Sigmoid colon (tissue), 7 donors: ENCODE measurements at regions of chr15 and their contacts with region 1.

Region 1: DNA sequence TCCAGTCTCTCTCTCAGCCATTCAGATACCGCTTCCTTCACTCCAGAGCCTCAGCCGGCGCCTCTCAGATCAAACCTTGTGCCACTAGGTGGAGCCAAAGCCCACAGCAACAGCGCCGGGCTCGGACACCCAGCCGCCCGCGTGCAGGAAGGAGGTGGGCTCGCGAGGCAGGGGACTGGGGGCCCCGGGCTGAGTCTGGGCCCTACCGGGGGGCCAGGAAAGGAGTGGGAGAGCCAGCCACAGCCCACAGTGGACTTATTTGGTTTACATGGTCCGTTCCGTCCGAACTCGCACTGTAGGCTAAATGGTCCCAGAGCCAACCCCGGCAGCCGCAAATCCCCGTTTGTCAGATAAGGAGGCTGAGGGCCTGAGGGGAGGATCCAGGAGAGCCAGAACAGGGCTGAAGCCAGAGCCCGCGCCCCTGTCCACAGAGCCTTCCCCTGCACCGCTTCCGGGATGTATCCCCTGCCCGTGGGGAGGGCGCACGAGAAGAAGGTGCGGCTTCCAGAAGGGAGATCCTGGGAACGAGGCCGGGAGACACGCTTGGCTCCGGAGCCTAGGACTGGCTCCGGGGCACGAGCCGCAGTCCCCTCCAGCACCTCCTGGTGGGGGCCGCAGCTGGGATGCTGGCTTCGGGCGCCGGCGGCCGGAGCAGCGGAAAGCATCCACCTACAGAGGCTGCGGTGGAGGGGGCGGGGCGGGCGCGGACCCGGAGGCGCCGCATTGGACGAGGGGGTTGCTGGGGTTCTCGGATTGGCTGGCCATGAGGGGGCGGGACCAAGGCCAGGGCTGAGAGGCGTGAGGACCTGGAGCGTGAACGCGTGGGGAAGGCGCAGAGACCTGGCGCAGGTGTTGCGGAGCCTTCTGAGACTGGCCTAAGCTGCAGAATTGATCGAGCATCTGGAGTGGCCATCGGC is 6.5 kb upstream of the CYP11A1 start:
- DNase-seq: peak; percentile 95
- H3K4me3 ChIP-seq: peak overlapping the region; percentile 40 to 67 (median 54)
- H3K27ac ChIP-seq: peak overlapping the region in 1 of 4 donors; percentile 61
- H3K4me1 ChIP-seq: peaks cover 0 to 19% (median 12%) of the 10 kb centered on the region in 4 donors
- H3K27me3 ChIP-seq: no peaks in the 10 kb centered on the region
- CTCF ChIP-seq: peak; percentile 59 to 88 (median 72)
- EP300 ChIP-seq: no peak
- POLR2A ChIP-seq: no peak

Region 2: DNA sequence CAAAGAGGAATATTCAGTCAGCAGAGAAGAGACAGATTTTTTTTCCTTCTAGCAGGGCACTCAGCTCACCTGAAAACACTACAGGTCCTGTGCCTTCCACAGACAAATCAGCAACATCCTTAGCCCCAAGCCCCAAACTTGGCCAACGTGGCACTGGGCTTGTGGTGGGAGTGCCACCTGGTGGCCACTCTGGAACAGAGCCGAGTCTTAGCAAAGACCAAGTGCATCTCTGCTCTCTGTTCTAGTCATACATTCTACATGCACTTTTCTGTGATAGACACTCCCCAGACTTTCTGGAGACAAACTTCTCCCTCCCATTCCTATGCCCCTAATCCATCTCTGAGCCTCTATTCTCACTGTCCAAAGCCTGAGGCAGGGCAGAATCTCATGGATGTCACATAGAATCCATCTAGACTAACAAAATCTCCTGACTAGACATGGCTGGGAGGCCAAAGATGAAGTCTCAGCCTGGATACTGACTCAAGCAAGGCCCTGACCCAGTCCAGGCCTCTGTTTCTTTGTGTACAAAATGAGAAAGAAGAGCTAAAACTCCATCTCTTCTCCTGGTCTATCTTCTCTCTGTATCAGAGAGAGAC is 64.8 kb after region 1 on chr15:
- intact Hi-C with region 1: loop called (anchors 1 kb)
- DNase-seq: peak; percentile 78
- H3K4me3 ChIP-seq: no peak overlapping the region
- H3K27ac ChIP-seq: no peak overlapping the region
- H3K4me1 ChIP-seq: peaks cover 0 to 9% (median 6%) of the 10 kb centered on the region in 4 donors
- H3K27me3 ChIP-seq: peaks cover 0 to 3% (median 0%) of the 10 kb centered on the region in 3 donors
- CTCF ChIP-seq: peak; percentile 49 to 87 (median 65)
- EP300 ChIP-seq: no peak
- POLR2A ChIP-seq: no peak

Region 3: GRCh38 chr15:74489518-74490338 is 115.7 kb after region 1 on chr15:
- intact Hi-C with region 1: loop called (anchors 5 kb)
- DNase-seq: no peak
- H3K4me3 ChIP-seq: no peak overlapping the region
- H3K27ac ChIP-seq: no peak overlapping the region
- H3K4me1 ChIP-seq: no peaks in the 10 kb centered on the region
- H3K27me3 ChIP-seq: no peaks in the 10 kb centered on the region
- CTCF ChIP-seq: peak in 2 of 4 experiments; percentile 14 to 62
- EP300 ChIP-seq: no peak
- POLR2A ChIP-seq: no peak

Region 4: DNA sequence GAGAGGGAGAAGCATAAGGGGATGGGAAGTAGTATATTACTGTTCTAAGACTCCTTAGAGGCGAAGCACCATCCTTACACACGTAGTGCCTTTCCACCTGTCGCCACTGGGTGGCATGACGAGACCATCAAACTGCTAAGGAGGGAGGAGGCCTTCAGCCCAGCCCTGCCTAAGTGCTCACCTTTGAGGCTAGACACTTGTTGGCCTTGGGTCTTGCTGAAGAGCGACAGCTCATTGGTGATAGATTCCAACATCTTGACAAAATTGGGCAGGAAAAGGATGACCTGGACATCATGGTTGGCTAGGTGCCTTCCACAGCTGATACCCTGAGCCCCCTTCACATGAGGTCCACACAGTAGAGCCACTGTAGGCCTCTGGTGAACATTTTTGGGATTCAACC is 261.2 kb after region 1 on chr15:
- intact Hi-C with region 1: loop called (anchors 5 kb)
- DNase-seq: no peak
- H3K4me3 ChIP-seq: no peak overlapping the region
- H3K27ac ChIP-seq: no peak overlapping the region
- H3K4me1 ChIP-seq: no peaks in the 10 kb centered on the region
- H3K27me3 ChIP-seq: no peaks in the 10 kb centered on the region
- CTCF ChIP-seq: peak; percentile 72 to 88 (median 84)
- EP300 ChIP-seq: no peak
- POLR2A ChIP-seq: no peak

Region 5: DNA sequence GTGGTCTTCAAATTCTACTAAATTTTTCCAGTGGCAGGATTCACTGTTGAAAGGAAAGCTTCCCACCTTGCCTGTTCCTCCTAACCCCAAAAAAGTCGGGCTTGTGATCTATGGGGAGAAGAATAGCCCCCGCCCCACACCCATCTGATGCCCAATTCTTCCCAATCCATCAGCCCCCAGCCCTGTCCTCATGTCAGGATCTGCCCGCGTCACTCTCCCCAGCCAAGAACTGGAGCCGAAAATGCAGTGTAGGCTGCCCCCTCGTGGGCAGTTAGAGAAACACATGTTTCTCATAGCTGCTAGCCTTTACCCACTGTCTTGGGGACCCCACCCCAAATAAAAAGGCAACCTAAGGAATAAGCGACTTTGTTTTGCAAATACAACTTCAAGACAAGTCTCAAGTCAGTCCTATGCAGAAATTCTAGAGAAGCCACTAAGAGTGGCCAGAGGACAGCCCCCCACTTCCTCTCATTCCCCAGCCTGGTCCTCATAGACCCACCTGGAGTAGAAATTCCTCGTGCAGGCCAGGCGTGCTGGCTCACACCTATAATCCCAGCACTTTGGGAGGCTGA is 394.9 kb after region 1 on chr15:
- intact Hi-C with region 1: loop called (anchors 5 kb)
- DNase-seq: no peak
- H3K4me3 ChIP-seq: peak overlapping the region in 1 of 4 donors; percentile 5
- H3K27ac ChIP-seq: no peak overlapping the region
- H3K4me1 ChIP-seq: peaks cover 0 to 6% (median 3%) of the 10 kb centered on the region in 4 donors
- H3K27me3 ChIP-seq: peaks cover 0 to 16% (median 0%) of the 10 kb centered on the region in 3 donors
- CTCF ChIP-seq: peak; percentile 71 to 86 (median 86)
- EP300 ChIP-seq: no peak
- POLR2A ChIP-seq: no peak

Region 6: GRCh38 chr15:74956648-74957300 is 582.8 kb after region 1 on chr15 and contains the start of gene RPP25:
- intact Hi-C with region 1: loop called (anchors 10 kb)
- DNase-seq: peak; percentile 90
- H3K4me3 ChIP-seq: peak within 1 kb of the TSS; percentile 33 to 65 (median 56)
- H3K27ac ChIP-seq: peak within 1 kb of the TSS; percentile 68 to 84 (median 70)
- H3K4me1 ChIP-seq: peaks cover 0 to 51% (median 40%) of the 10 kb centered on the region in 4 donors
- H3K27me3 ChIP-seq: peaks cover 20 to 63% (median 30%) of the 10 kb centered on the region in 3 donors
- CTCF ChIP-seq: no peak
- EP300 ChIP-seq: no peak
- POLR2A ChIP-seq: no peak
- total RNA-seq, gene RPP25: 3.7 to 4.8 (median 4.7) TPM